Activated T-helper 2 cell treated with anti-CD3 and anti-CD28 coated beads, Interferon-gamma antibody, Interleukin-2, Interleukin-4, amounts not matched to agents 10 μg/mL and 5 μg/mL and 100 μg/mL, durations not matched to agents 14 hours and 24 hours and 36 hours (primary cell): ENCODE measurements at regions of chr9 and their contacts with region 1.

Region 1: DNA sequence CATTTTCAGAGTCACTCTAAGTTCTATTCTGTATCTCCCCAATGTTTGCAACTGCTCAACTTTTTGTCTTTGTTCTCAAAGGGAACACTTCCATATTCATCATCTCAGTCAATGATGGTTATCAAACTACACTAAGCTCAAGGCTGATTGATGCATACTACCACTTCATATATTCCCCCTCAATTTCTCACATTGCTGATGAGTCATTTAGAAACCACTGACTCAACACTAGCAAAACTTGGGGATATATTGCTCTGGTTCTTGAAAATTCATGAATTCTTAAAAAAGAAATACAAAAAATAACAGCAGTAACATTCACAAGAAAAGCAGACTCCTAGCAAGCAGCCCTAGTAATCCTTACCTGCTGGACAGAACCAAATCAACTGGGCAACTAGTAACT is 52.2 kb downstream of the ABHD17B start:
- DNase-seq: no peak
- H3K4me3 Mint-ChIP-seq: no peak overlapping the region
- H3K27ac Mint-ChIP-seq: peak overlapping the region; percentile 44
- H3K4me1 Mint-ChIP-seq: peaks cover 29% of the 10 kb centered on the region
- H3K27me3 Mint-ChIP-seq: no peaks in the 10 kb centered on the region

Region 2: DNA sequence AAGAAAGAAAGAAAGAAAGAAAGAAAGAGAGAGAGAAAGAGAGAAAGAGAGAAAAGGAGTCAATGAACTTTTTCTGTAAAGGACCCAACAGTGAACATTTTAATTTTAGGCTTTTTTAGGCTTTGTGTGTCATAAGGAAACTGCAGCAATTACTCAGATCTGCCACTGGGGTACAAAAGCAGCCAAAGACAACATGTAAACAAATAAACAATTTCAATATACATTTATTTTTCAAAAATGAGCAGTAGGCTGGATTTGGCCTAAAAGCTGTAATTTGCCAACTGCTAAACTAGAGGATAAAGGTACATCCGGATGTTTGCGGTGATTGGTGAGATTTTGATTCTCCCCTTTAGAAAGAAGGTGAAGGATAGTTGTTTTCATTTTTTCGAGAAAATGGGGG is 234.1 kb before region 1 on chr9:
- intact Hi-C with region 1: no loop called
- DNase-seq: no peak
- H3K4me3 Mint-ChIP-seq: no peak overlapping the region
- H3K27ac Mint-ChIP-seq: no peak overlapping the region
- H3K4me1 Mint-ChIP-seq: no peaks in the 10 kb centered on the region
- H3K27me3 Mint-ChIP-seq: peaks cover 14% of the 10 kb centered on the region

Region 3: GRCh38 chr9:71819115-71819739 is 39.6 kb before region 1 on chr9:
- intact Hi-C with region 1: loop called (anchors 5 kb)
- DNase-seq: no peak
- H3K4me3 Mint-ChIP-seq: no peak overlapping the region
- H3K27ac Mint-ChIP-seq: no peak overlapping the region
- H3K4me1 Mint-ChIP-seq: peaks cover 29% of the 10 kb centered on the region
- H3K27me3 Mint-ChIP-seq: peaks cover 7% of the 10 kb centered on the region

Region 4: DNA sequence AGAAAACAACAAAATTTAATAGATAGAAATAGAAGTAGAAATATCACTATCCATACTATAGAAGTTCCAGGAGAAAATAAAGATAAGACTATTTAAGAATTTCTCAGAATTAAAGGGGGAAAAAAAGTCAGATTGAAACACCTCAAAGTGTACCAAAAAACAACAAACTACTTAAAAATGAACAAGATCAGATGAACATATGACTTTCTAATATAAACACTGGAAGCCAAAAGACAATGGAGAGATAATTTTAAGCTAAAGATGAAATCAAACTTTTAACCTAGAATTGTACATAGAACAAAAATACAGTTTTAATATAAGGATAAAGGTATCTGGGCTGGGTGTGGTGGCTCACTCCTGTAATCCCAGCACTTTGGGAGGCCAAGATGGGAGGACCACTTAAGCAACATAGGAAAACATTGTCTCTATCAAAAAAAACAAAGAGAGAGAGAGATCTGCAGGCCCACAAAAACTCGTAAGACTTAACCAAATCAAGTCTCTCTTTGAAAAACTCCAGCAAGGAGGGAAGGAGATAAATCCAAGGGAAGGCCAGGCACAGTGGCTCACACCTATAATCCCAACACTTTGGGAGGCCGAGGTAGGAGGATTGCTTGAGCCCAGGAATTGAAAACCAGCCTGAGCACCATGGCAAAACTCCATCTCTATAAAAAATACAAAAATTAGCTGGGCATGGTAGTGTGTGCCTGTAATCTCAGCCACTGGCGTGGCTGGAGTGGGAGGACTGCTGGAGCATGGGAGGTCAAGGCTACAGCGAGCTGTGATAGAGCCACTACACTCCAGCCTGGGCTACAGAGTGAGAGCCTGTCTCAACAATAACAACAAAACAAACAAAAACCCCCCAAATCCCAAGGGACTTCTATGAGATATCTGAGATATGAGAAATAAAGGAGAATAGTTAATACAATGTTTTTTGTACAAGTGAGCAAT is 19.8 kb after region 1 on chr9:
- intact Hi-C with region 1: loop called (anchors 2 kb)
- DNase-seq: no peak
- H3K4me3 Mint-ChIP-seq: no peak overlapping the region
- H3K27ac Mint-ChIP-seq: peak overlapping the region; percentile 38
- H3K4me1 Mint-ChIP-seq: peaks cover 12% of the 10 kb centered on the region
- H3K27me3 Mint-ChIP-seq: no peaks in the 10 kb centered on the region

Region 5: GRCh38 chr9:72292256-72292682 is 433.5 kb after region 1 on chr9:
- intact Hi-C with region 1: no loop called
- DNase-seq: no peak
- H3K4me3 Mint-ChIP-seq: no peak overlapping the region
- H3K27ac Mint-ChIP-seq: no peak overlapping the region
- H3K4me1 Mint-ChIP-seq: peaks cover 3% of the 10 kb centered on the region
- H3K27me3 Mint-ChIP-seq: peaks cover 18% of the 10 kb centered on the region